Lower lobe of right lung (tissue), 2 donors: ENCODE measurements at regions of chr18 and their contacts with region 1.

Region 1: DNA sequence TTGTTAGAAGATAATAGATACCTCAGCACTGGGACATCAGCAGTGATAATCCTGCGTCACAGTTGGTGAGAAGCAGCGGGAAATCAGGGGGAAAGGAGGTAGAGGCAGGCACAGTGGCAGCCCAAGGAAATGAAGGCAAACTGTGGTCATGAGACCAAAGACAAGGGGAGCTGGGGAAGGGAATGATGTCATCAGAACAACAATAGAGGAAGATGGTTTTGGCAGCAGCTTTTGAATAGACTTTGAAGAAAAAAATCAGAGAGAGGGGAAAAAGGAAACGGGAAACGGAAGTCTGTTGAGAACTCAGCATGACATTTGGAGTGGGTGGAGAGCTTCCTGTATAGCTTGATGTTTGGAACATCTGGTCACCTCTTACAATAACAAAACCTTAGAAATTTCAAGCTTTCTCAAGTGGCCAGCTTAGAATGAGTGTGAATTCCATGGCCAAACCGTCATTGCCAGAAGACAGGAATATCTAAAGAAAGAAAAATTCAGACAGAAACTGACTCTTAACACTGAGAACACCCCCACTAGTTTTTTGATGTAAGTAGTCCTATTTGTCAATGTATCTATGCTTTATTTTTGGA is 18.4 kb upstream of the YES1 start:
- DNase-seq: no peak
- ATAC-seq: peak; percentile 65 to 72
- H3K4me3 ChIP-seq: no peak overlapping the region
- H3K27ac ChIP-seq: peak overlapping the region; percentile 65
- H3K4me1 ChIP-seq: peaks cover 6% of the 10 kb centered on the region
- H3K27me3 ChIP-seq: peaks cover 4% of the 10 kb centered on the region
- CTCF ChIP-seq: no peak

Region 2: GRCh38 chr18:741931-742512 is 88.4 kb before region 1 on chr18:
- intact Hi-C with region 1: loop called (anchors 5 kb)
- DNase-seq: no peak
- ATAC-seq: peak; percentile 78 to 80
- H3K4me3 ChIP-seq: no peak overlapping the region
- H3K27ac ChIP-seq: no peak overlapping the region
- H3K4me1 ChIP-seq: no peaks in the 10 kb centered on the region
- H3K27me3 ChIP-seq: no peaks in the 10 kb centered on the region
- CTCF ChIP-seq: peak; percentile 77

Region 3: DNA sequence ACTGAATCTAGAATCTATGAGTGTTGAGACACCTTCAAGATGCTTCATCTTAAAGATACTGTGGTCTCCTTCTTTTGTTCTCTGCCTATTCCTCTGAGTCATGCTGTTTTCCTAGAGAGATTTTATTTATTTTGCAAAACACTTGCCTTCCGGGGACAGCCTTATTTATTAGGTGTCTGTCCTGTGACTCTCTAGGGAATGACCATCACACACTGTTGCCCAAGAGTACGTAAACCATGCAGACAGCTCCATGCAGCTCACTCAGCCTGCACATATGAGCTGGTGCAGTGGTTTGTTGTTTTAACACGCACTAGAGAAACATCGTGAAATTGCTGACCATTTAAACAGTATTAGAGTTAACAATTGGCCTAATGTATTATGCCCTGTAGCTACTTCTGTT is 61.9 kb after region 1 on chr18:
- intact Hi-C with region 1: no loop called
- DNase-seq: no peak
- ATAC-seq: no peak
- H3K4me3 ChIP-seq: no peak overlapping the region
- H3K27ac ChIP-seq: no peak overlapping the region
- H3K4me1 ChIP-seq: no peaks in the 10 kb centered on the region
- H3K27me3 ChIP-seq: peaks cover 5% of the 10 kb centered on the region
- CTCF ChIP-seq: no peak